A549 (cell line): ENCODE measurements at regions of chr10 and their contacts with region 1.

Region 1: GRCh38 chr10:73644015-73644743 is 2.9 kb upstream of the MYOZ1 start:
- DNase-seq: peak; percentile 71 to 81
- ATAC-seq: peak; percentile 86 to 88
- H3K4me3 ChIP-seq: no peak overlapping the region
- H3K27ac ChIP-seq: no peak overlapping the region
- H3K4me1 ChIP-seq: no peaks in the 10 kb centered on the region
- CTCF ChIP-seq: peak; percentile 93
- EP300 ChIP-seq: no peak
- POLR2A ChIP-seq: no peak
- RAD21 ChIP-seq: peak; percentile 95 to 98

Region 2: GRCh38 chr10:73517271-73517877 is 126.8 kb before region 1 on chr10:
- CTCF ChIA-PET with region 1: interaction called, 41 read pairs
- POLR2A ChIA-PET with region 1: no interaction called
- DNase-seq: no peak
- ATAC-seq: no peak
- H3K4me3 ChIP-seq: no peak overlapping the region
- H3K27ac ChIP-seq: no peak overlapping the region
- H3K4me1 ChIP-seq: no peaks in the 10 kb centered on the region
- CTCF ChIP-seq: no peak
- EP300 ChIP-seq: no peak
- POLR2A ChIP-seq: no peak
- RAD21 ChIP-seq: no peak

Region 3: DNA sequence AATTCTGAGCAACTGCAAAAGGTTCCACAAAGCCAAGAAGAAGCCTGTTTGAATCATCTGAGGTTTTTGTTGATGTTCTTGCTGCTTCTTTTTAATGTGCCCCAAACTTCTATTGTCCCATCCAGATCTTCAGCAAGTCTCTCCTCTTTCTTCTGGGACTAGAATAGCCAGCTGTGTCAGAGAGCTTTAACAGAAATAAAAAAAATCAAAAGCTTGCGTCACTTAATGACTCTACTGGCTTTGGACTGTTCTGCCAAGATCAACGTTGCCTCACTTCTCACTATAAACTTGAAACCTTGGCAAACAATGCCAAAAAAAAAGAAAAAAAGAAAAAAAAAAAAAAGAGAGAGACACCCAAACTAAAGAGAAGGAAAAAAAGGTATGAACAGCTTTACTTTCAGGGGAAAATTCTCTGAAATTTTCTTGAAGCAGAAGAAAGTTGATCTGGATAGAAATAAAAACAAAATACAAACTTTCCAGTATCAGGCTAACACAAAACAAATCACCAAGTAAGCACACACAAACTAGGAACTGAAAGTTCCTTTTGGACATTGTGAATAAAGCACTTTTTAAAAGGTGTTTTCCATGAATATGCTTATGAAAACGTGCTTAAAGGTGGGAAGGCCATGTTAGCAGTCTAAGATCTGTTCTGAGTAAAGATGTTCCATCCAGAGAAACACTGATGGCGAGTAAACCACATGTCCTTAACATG is 67.8 kb before region 1 on chr10:
- CTCF ChIA-PET with region 1: interaction called, 13 read pairs
- POLR2A ChIA-PET with region 1: no interaction called
- DNase-seq: peak in 1 of 2 experiments; percentile 19
- ATAC-seq: 0 out of 6 replicates have a peak, but pooled peaks of 1 of the 2 experiments have one; percentile 48
- H3K4me3 ChIP-seq: no peak overlapping the region
- H3K27ac ChIP-seq: peak overlapping the region in 1 of 2 experiments; percentile 34; a peak in 1 of 6 replicates
- H3K4me1 ChIP-seq: peaks cover 13% of the 10 kb centered on the region; the same call in 2 of the 3 replicates
- CTCF ChIP-seq: no peak
- EP300 ChIP-seq: no peak
- POLR2A ChIP-seq: no peak
- RAD21 ChIP-seq: no peak

Region 4: GRCh38 chr10:73601486-73601921 is 42.7 kb before region 1 on chr10:
- CTCF ChIA-PET with region 1: interaction called, 11 read pairs
- POLR2A ChIA-PET with region 1: no interaction called
- DNase-seq: peak in 1 of 2 experiments; percentile 42
- ATAC-seq: peak; percentile 54 to 61
- H3K4me3 ChIP-seq: no peak overlapping the region
- H3K27ac ChIP-seq: no peak overlapping the region
- H3K4me1 ChIP-seq: peaks cover 7% of the 10 kb centered on the region; the same call in 2 of the 3 replicates
- CTCF ChIP-seq: no peak
- EP300 ChIP-seq: no peak
- POLR2A ChIP-seq: no peak
- RAD21 ChIP-seq: no peak

Region 5: GRCh38 chr10:73609116-73609515 is 35.1 kb before region 1 on chr10:
- CTCF ChIA-PET with region 1: interaction called, 25 read pairs
- POLR2A ChIA-PET with region 1: no interaction called
- DNase-seq: no peak
- ATAC-seq: no peak
- H3K4me3 ChIP-seq: no peak overlapping the region
- H3K27ac ChIP-seq: no peak overlapping the region
- H3K4me1 ChIP-seq: no peaks in the 10 kb centered on the region
- CTCF ChIP-seq: no peak
- EP300 ChIP-seq: no peak
- POLR2A ChIP-seq: no peak
- RAD21 ChIP-seq: no peak

Region 6: GRCh38 chr10:73625884-73626752 is 18.1 kb before region 1 on chr10:
- CTCF ChIA-PET with region 1: interaction called, 77 read pairs
- POLR2A ChIA-PET with region 1: no interaction called
- DNase-seq: peak; percentile 98 to 99
- ATAC-seq: peak; percentile 98
- H3K4me3 ChIP-seq: peak overlapping the region; percentile 72
- H3K27ac ChIP-seq: peak overlapping the region; percentile 89 to 96
- H3K4me1 ChIP-seq: peaks cover 13% of the 10 kb centered on the region
- CTCF ChIP-seq: no peak
- EP300 ChIP-seq: no peak
- POLR2A ChIP-seq: peak; percentile 83
- RAD21 ChIP-seq: no peak

Region 7: GRCh38 chr10:73810735-73811465 is 166.7 kb after region 1 on chr10:
- CTCF ChIA-PET with region 1: no interaction called
- POLR2A ChIA-PET with region 1: no interaction called
- DNase-seq: peak; percentile 29 to 58
- ATAC-seq: peak; percentile 54 to 55
- H3K4me3 ChIP-seq: peak overlapping the region; percentile 90
- H3K27ac ChIP-seq: peak overlapping the region; percentile 92 to 95
- H3K4me1 ChIP-seq: peaks cover 14% of the 10 kb centered on the region; the same call in 2 of the 3 replicates
- CTCF ChIP-seq: no peak
- EP300 ChIP-seq: no peak
- POLR2A ChIP-seq: no peak
- RAD21 ChIP-seq: no peak